Activated CD8-positive, alpha-beta memory T cell treated with anti-CD3 and anti-CD28 coated beads, Interleukin-2, amount 10 ng/mL, durations not matched to agents 7 days and 5 days (primary cell): ENCODE measurements at regions of chr20 and their contacts with region 1.

Region 1: DNA sequence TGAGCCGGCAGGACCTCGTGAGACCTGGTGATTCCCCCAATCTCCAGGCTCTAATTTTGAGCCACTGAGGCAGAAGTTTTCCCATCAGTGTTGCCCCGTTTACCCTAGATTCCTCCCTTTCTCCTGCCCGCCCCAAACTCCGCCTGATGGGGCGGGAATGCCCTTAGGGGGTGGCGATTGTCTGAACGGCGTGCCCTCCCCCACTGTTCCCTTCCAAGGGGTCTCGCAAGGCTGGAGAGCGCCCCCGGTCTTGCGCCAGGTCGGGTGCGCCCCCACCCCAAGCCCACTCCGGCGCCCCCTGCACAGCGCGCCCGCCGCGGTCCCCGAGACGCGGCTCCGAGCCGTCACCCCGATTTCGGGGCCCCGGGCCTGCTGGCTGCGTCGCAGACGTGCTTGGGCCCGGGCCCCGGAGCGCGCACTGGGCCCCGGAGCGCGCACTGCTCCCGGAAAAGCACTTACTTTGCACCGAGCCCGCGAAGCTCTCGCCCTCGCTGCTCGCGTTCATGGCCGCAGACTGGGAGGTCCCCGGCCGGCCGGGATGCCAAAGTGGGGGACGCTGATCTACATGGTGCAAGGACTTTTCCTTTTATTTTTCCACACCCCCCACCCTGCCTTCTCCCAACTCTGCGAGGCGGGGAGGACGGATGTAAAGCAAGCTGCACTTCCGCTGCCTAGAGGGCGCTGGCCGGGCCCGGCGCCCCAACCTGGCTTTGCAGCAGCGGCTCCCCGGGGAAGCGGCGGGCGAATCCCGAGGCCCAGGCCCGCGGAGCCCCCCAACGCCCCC is at the start of gene ZFP64:
- DNase-seq: peak; percentile 79
- ATAC-seq: peak; percentile 87
- H3K4me3 Mint-ChIP-seq: peak within 1 kb of the TSS; percentile 91
- H3K27ac Mint-ChIP-seq: peak within 1 kb of the TSS; percentile 91
- H3K4me1 Mint-ChIP-seq: peaks cover 18% of the 10 kb centered on the region
- H3K27me3 Mint-ChIP-seq: no peaks in the 10 kb centered on the region
- total RNA-seq, gene ZFP64: 11.3 to 11.5 TPM

Region 2: GRCh38 chr20:52076164-52076563 is 115.2 kb before region 1 on chr20:
- CTCF ChIA-PET with region 1: no interaction called
- DNase-seq: no peak
- ATAC-seq: no peak
- H3K4me3 Mint-ChIP-seq: no peak overlapping the region
- H3K27ac Mint-ChIP-seq: no peak overlapping the region
- H3K4me1 Mint-ChIP-seq: no peaks in the 10 kb centered on the region
- H3K27me3 Mint-ChIP-seq: no peaks in the 10 kb centered on the region

Region 3: GRCh38 chr20:52142757-52143156 is 48.6 kb before region 1 on chr20:
- CTCF ChIA-PET with region 1: no interaction called
- DNase-seq: no peak
- ATAC-seq: no peak
- H3K4me3 Mint-ChIP-seq: no peak overlapping the region
- H3K27ac Mint-ChIP-seq: no peak overlapping the region
- H3K4me1 Mint-ChIP-seq: no peaks in the 10 kb centered on the region
- H3K27me3 Mint-ChIP-seq: no peaks in the 10 kb centered on the region

Region 4: DNA sequence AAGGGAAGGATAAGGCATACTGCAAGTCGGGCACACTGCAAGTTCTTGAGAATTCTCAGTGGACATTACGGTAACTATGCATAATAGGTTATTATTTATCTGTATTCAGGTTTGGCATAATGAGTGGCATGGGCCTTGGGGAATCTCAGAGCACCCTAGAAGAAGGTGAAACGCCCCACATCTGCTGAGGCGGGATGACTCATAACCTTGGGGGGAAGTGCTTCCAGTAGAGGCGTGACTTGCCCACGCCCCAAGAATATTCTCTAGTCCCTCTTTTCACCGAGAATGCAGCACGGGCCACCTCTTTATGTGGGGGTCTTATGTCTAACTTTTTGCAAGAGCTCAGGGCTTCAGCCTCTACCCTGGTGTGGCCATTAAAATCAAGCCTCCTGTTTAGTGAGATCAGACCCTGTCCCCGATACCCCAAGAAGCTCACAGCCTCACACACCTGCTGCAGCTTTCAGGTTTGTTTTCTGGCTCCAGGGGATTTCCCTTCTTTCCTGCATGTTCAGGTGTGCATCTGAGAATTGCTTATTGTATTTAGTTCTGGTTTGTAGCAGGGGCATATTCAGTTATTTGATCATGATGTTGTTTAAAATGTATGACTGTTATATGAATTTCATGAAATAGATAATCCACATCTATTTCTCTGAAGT is 18.8 kb before region 1 on chr20:
- CTCF ChIA-PET with region 1: interaction called, 10 read pairs
- DNase-seq: no peak
- ATAC-seq: no peak
- H3K4me3 Mint-ChIP-seq: no peak overlapping the region
- H3K27ac Mint-ChIP-seq: no peak overlapping the region
- H3K4me1 Mint-ChIP-seq: peaks cover 23% of the 10 kb centered on the region
- H3K27me3 Mint-ChIP-seq: no peaks in the 10 kb centered on the region

Region 5: DNA sequence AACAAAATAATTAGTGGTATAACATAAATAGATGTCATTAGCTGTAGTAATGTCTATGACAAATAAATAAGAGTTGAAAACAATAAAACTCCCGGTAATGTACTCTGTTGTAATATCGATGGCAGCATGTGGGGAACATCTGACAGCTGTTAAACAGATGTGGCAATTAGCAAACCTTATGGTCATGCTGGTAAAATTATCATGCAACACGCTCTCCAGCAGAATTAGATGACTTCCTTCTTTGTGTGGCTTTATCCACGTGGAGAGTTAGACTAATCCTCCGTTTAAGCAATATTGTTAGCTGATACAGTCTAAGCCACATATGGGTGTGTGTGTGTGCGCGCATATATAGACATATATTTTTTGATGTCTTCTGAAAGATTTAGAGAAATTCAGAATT is 78.0 kb after region 1 on chr20:
- CTCF ChIA-PET with region 1: no interaction called
- DNase-seq: no peak
- ATAC-seq: no peak
- H3K4me3 Mint-ChIP-seq: no peak overlapping the region
- H3K27ac Mint-ChIP-seq: no peak overlapping the region
- H3K4me1 Mint-ChIP-seq: no peaks in the 10 kb centered on the region
- H3K27me3 Mint-ChIP-seq: peaks cover 11% of the 10 kb centered on the region

Region 6: GRCh38 chr20:52295556-52295955 is 104.2 kb after region 1 on chr20:
- CTCF ChIA-PET with region 1: no interaction called
- DNase-seq: no peak
- ATAC-seq: no peak
- H3K4me3 Mint-ChIP-seq: no peak overlapping the region
- H3K27ac Mint-ChIP-seq: no peak overlapping the region
- H3K4me1 Mint-ChIP-seq: no peaks in the 10 kb centered on the region
- H3K27me3 Mint-ChIP-seq: no peaks in the 10 kb centered on the region